ENCODE measurements at regions of chr2 and their contacts with region 1.

Region 1: GRCh38 chr2:219543601-219544358 is at the starts of genes CHPF and TMEM198:
- DNase-seq: peak; percentile 95
- H3K4me3 Mint-ChIP-seq: peak within 1 kb of the TSS; percentile 78
- H3K27ac Mint-ChIP-seq: peak within 1 kb of the TSS; percentile 74
- H3K4me1 Mint-ChIP-seq: peaks cover 23% of the 10 kb centered on the region
- H3K27me3 Mint-ChIP-seq: peaks cover 17% of the 10 kb centered on the region
- total RNA-seq, gene CHPF: 14.5 to 14.9 TPM
- total RNA-seq, gene TMEM198: 0.95 to 1.0 TPM

Region 2: GRCh38 chr2:219560037-219560892 is 16.5 kb after region 1 on chr2:
- CTCF ChIA-PET with region 1: interaction called, 34 read pairs
- POLR2A ChIA-PET with region 1: no interaction called
- DNase-seq: no peak
- H3K4me3 Mint-ChIP-seq: no peak overlapping the region
- H3K27ac Mint-ChIP-seq: no peak overlapping the region
- H3K4me1 Mint-ChIP-seq: no peaks in the 10 kb centered on the region
- H3K27me3 Mint-ChIP-seq: no peaks in the 10 kb centered on the region

Region 3: DNA sequence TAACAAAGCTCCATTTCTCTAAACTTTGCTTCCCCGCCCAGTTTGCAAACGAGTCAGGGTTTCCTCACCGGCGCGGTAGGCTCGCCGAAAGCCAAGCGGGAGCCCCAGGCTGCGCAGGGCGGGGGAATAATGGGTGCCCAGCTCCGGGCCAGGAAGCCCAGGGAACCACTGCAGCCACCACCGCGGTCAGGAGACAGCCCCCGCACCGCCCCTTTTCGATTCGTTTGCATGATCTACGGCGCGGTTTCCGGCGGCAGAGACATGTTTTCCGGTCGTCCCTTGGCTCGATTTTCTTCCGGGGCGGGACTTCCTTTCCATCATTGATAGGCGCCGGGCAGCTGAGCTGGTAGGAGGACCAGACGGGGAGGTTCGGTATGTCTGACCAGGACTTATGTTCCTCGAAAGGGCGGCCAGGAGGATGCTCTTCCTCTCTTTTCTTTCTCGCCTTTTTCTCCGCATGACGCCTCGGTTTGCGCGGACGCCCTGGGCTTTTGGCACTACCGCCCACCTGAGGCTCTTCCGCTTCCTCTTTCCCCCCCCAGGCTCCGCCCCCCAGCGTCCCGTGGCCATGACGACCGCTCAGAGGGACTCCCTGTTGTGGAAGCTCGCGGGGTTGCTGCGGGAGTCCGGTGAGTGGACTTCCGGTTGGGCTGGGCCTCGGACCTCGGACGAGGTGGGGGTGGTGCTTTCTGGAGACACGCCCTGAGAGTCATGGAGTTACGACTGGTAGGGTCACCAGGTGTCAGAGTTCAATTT is 54.0 kb after region 1 on chr2 and contains the start of gene STK11IP:
- CTCF ChIA-PET with region 1: interaction called, 21 read pairs
- POLR2A ChIA-PET with region 1: interaction called, 5 read pairs
- DNase-seq: peak; percentile 94
- H3K4me3 Mint-ChIP-seq: peak within 1 kb of the TSS; percentile 96
- H3K27ac Mint-ChIP-seq: peak within 1 kb of the TSS; percentile 89
- H3K4me1 Mint-ChIP-seq: peaks cover 24% of the 10 kb centered on the region
- H3K27me3 Mint-ChIP-seq: peaks cover 10% of the 10 kb centered on the region
- total RNA-seq, gene STK11IP: 28.4 to 31.5 TPM

Region 4: GRCh38 chr2:219642465-219643080 is 98.8 kb after region 1 on chr2:
- CTCF ChIA-PET with region 1: interaction called, 53 read pairs
- POLR2A ChIA-PET with region 1: no interaction called
- DNase-seq: peak; percentile 91
- H3K4me3 Mint-ChIP-seq: no peak overlapping the region
- H3K27ac Mint-ChIP-seq: no peak overlapping the region
- H3K4me1 Mint-ChIP-seq: peaks cover 6% of the 10 kb centered on the region
- H3K27me3 Mint-ChIP-seq: peaks cover 7% of the 10 kb centered on the region

Region 5: DNA sequence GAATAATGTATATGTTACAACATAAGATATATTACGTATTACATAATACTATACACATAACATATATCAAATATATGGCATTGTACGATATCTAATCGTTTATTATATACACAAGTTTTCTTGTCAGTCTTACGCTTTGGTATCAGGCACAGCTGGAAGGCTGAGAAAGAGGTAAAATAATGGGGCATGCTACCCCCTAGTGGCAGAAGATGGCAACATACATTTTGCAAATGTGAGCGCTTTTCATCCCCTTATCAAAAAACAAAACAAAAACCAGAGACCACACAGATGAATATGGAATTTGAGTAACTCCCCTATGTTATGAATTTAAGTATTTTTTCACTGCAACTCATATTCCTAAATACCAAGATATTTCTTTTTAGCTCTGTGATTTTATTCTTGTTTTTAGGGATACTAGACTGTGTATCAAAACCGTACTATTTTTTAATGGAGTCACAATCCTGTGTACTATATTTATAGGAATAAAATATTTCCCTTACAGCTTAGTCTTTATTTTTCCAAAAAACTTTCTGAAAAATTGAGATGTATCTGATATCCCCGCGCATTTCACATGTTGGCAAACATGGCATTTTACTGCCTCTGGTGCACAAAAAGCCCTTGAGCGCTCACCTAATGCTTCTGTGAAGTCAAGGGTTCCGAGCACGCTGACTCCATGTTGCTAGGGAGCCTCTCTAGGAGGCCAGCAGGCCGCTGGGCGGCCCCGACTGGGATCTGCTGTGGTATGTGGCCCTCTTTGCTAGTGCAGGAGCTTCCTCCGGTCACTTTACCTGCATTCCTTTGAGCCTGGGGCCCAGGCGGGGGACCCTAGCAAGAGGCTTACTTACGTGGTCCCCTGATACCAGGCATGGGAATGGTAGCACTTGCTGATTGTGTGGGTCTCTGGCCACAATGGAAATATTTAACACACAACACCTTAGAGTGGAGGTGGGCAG is 146.2 kb after region 1 on chr2:
- CTCF ChIA-PET with region 1: interaction called, 23 read pairs
- POLR2A ChIA-PET with region 1: no interaction called
- DNase-seq: peak; percentile 39
- H3K4me3 Mint-ChIP-seq: no peak overlapping the region
- H3K27ac Mint-ChIP-seq: no peak overlapping the region
- H3K4me1 Mint-ChIP-seq: peaks cover 6% of the 10 kb centered on the region
- H3K27me3 Mint-ChIP-seq: peaks cover 26% of the 10 kb centered on the region

Region 6: DNA sequence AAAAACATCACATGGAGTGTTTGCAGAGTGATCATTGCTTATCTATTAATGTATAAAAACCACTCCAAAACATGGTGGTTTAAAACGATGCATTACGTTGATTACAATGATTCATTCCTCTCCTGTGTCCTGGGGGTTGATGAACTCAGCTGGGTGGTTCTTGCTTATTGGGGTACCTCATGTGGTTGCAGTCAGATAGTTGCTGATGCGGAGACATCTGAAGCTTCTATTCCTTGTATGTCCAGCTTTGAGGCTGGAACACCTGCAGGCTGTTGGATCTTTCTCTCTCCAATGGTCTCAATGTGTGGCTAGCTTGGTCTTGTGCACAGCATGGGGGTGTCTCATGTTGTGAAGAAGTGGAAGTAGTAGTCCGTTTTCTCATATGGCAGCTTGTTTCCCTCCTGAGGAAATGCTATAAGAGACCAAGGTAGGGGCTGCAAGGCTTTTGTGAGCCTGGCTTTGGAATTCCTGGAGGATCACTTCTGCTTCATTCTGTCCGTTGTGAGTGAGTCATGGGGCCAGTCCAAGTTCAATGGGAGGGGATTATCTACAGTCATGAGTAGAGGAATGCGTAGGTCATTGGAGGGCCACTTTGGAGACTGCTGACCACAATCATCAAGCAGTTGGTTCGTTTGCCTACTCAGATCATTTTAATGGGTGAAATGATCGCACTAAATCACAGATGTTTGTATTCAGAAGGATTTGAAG is 684.7 kb after region 1 on chr2:
- CTCF ChIA-PET with region 1: no interaction called
- POLR2A ChIA-PET with region 1: no interaction called
- DNase-seq: no peak
- H3K4me3 Mint-ChIP-seq: no peak overlapping the region
- H3K27ac Mint-ChIP-seq: no peak overlapping the region
- H3K4me1 Mint-ChIP-seq: no peaks in the 10 kb centered on the region
- H3K27me3 Mint-ChIP-seq: no peaks in the 10 kb centered on the region

Measured in activated CD4-positive, alpha-beta memory T cell treated with anti-CD3 and anti-CD28 coated beads, Interleukin-2, amount 10 ng/mL, durations not matched to agents 7 days and 5 days (primary cell).